PC-9 (cell line): ENCODE measurements at regions of chr14 and their contacts with region 1.

Region 1: DNA sequence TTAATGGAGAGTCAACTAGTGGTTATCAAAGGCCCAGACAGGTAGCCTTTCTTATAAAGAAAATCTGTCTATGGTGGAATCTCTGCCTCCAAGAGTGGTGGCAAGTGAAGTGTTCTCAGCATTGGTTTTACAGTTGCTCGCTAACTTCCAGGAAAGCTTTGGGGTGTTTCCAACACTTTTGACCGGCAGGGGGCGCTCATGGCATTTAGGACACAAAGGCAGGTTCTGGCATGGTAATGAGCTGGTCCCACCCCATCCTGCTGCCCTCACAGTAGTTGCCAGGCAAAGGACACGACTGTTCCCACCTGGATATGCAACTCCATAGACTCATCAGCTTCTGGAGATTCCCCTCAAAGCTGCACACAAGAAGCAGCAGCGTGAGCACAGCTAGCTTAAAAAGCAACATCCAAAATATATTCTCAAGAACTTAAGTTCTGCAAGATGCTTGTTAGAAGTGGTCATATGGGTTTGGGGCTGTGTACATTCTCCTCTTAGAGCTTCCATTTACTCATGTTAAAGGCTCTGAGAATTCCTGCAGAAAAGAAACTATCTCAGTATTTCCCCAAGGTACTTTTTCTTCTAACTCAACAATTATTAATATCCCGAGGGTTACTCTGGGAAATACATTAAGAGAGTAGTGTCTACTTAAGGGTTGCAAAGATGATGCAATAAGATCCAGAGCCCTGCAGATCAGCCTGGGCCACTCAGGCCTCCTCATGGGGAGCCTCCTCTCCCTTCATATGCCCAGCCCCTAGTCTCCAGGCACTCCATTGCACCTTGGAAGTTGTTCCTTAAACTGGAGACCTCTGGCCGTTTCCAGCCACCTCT is 14.8 kb downstream of the PROX2 start:
- DNase-seq: peak; percentile 73 to 96
- H3K4me3 ChIP-seq: no peak overlapping the region
- H3K27ac ChIP-seq: no peak overlapping the region
- H3K4me1 ChIP-seq: peaks cover 5% of the 10 kb centered on the region; the same call in 1 of the 2 replicates
- H3K27me3 ChIP-seq: no peaks in the 10 kb centered on the region
- CTCF ChIP-seq: peak; percentile 99

Region 2: DNA sequence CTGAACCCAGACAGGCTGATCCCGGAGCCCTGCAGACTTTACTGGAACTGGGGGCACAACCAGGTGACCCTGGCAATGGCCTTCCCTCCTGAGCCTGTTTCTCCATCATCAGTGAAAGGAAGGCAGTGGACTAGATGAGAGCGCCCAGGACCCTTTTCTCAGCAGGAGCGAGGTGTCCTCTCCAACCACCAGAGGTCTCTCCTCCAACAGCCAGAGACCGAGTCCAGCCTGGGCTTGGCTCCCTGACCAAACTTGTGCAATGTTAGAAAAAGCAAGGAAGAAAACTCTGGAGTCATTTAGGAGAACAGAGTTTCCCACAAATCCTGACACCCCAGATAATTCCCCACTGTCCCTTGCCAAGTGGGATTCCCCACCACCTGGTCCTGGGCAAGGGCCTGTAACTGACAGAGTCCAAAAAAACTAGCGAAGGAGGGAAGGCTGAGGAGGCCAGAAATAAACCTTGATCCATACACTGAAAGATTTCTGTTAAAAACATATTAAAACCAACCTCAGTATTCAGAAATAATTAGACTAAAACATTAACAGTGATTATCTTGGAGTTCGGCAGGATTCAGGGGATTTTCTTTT is 53.0 kb after region 1 on chr14:
- CTCF ChIA-PET with region 1: interaction called, 128 read pairs
- POLR2A ChIA-PET with region 1: no interaction called
- intact Hi-C with region 1: no loop called
- DNase-seq: peak; percentile 73 to 82
- H3K4me3 ChIP-seq: no peak overlapping the region
- H3K27ac ChIP-seq: no peak overlapping the region
- H3K4me1 ChIP-seq: peaks cover 8% of the 10 kb centered on the region
- H3K27me3 ChIP-seq: no peaks in the 10 kb centered on the region
- CTCF ChIP-seq: peak; percentile 88

Region 3: GRCh38 chr14:74922739-74923401 is 61.8 kb after region 1 on chr14 and contains the start of gene RPS6KL1:
- CTCF ChIA-PET with region 1: interaction called, 10 read pairs
- POLR2A ChIA-PET with region 1: no interaction called
- intact Hi-C with region 1: no loop called
- DNase-seq: peak; percentile 66 to 87
- H3K4me3 ChIP-seq: peak within 1 kb of the TSS; percentile 76
- H3K27ac ChIP-seq: no peak within 1 kb of the TSS
- H3K4me1 ChIP-seq: peaks cover 4% of the 10 kb centered on the region
- H3K27me3 ChIP-seq: 0 out of 2 replicates have a peak, but pooled peaks cover 4% of the 10 kb centered on the region
- CTCF ChIP-seq: no peak
- total RNA-seq, gene RPS6KL1: 3.4 and 4.2 TPM in 2 replicates

Region 4: GRCh38 chr14:75088574-75089373 is 227.7 kb after region 1 on chr14:
- CTCF ChIA-PET with region 1: interaction called, 37 read pairs
- POLR2A ChIA-PET with region 1: no interaction called
- intact Hi-C with region 1: loop called (anchors 1 kb)
- DNase-seq: peak; percentile 59 to 67
- H3K4me3 ChIP-seq: no peak overlapping the region
- H3K27ac ChIP-seq: no peak overlapping the region
- H3K4me1 ChIP-seq: no peaks in the 10 kb centered on the region
- H3K27me3 ChIP-seq: no peaks in the 10 kb centered on the region
- CTCF ChIP-seq: peak; percentile 99